Astrocyte of the cerebellum (primary cell): ENCODE measurements at regions of chr22 and their contacts with region 1.

Region 1: GRCh38 chr22:42331014-42331413 is 60.6 kb upstream of the TCF20 start:
- DNase-seq: no peak
- H3K4me3 ChIP-seq: no peak overlapping the region
- CTCF ChIP-seq: no peak

Region 2: GRCh38 chr22:42180349-42180842 is 150.6 kb before region 1 on chr22:
- in situ Hi-C with region 1: loop called (anchors 10 kb)
- DNase-seq: peak; percentile 11
- H3K4me3 ChIP-seq: no peak overlapping the region
- CTCF ChIP-seq: no peak

Region 3: GRCh38 chr22:42269407-42270177 is 61.4 kb before region 1 on chr22:
- in situ Hi-C with region 1: loop called (anchors 5 kb)
- DNase-seq: no peak
- H3K4me3 ChIP-seq: peak overlapping the region; percentile 91
- CTCF ChIP-seq: no peak

Region 4: GRCh38 chr22:42388130-42388797 is 57.2 kb after region 1 on chr22:
- in situ Hi-C with region 1: no loop called
- DNase-seq: no peak
- H3K4me3 ChIP-seq: no peak overlapping the region
- CTCF ChIP-seq: no peak

Region 5: DNA sequence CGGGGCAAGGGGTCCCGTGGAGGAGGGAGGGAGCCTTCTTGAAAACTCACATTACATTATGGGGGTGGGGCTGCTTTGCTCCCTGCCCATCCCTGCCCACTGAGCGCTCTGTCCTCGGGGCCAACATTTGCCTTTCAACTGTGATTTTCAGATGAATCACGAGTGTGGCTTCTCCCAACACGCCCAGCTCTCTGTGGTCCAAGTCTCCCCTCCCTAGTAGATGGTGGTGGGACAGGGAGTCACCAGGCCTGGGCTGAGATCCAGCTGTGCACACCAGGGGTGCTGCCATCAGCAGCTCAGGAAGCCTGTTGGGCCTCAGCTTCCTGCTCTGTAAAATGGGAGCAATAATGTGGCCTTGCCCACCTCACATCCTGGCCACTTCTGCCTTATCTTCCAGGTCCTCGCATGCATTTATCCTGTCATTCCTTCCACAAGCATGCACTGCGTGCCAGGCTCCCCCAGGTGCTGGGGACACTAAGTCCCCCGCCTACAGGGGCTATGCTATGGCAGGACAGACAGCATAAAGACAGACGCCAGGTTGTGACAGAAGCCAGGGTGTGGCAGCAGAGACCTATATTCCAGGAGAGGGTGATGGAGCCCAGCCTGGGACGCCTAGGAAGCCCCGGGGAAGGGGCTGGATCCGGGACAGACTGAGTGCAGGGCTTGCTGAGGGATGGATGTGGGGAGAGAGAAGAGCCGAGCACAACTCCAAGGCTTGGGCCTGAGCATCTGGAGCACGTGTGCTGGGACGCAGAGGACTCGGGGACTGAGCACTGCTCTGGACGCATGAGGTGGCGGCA is 70.7 kb after region 1 on chr22:
- in situ Hi-C with region 1: no loop called
- DNase-seq: no peak
- H3K4me3 ChIP-seq: no peak overlapping the region
- CTCF ChIP-seq: no peak